Calu3 (cell line): ENCODE measurements at regions of chr11 and their contacts with region 1.

Region 1: GRCh38 chr11:86696004-86696403 is 23.6 kb upstream of the ME3 start:
- DNase-seq: no peak
- H3K4me3 Mint-ChIP-seq: no peak overlapping the region
- H3K27ac Mint-ChIP-seq: no peak overlapping the region
- H3K4me1 Mint-ChIP-seq: peaks cover 19% of the 10 kb centered on the region
- H3K27me3 Mint-ChIP-seq: no peaks in the 10 kb centered on the region
- CTCF ChIP-seq: no peak

Region 2: DNA sequence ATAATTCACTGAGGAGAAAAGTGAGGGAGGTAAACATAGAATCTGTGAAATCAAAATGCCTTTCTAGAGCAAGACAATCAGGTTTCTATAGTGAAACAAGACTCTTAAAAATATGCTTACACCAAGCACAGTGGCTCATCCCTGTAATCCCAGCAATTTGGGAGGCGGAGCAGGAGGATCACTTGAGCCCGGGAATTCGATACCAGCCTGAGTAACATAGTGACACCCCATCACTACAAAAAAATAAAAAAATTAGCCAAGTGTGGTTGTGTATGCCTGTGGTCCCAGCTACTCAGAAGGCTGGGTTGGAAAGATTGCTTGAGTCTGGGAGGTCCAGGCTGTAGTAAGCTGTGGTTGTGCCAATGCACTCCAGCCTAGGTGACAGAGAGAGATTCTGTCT is 19.6 kb after region 1 on chr11:
- CTCF ChIA-PET with region 1: no interaction called
- intact Hi-C with region 1: no loop called
- DNase-seq: no peak
- H3K4me3 Mint-ChIP-seq: no peak overlapping the region
- H3K27ac Mint-ChIP-seq: no peak overlapping the region
- H3K4me1 Mint-ChIP-seq: peaks cover 33% of the 10 kb centered on the region
- H3K27me3 Mint-ChIP-seq: no peaks in the 10 kb centered on the region
- CTCF ChIP-seq: no peak

Region 3: GRCh38 chr11:86735462-86736302 is 39.7 kb after region 1 on chr11:
- CTCF ChIA-PET with region 1: interaction called, 3 read pairs
- intact Hi-C with region 1: loop called (anchors 5 kb)
- DNase-seq: no peak
- H3K4me3 Mint-ChIP-seq: no peak overlapping the region
- H3K27ac Mint-ChIP-seq: no peak overlapping the region
- H3K4me1 Mint-ChIP-seq: peaks cover 55% of the 10 kb centered on the region
- H3K27me3 Mint-ChIP-seq: no peaks in the 10 kb centered on the region
- CTCF ChIP-seq: no peak